ENCODE measurements at regions of chr10 and their contacts with region 1.

Region 1: GRCh38 chr10:76492026-76492425 is 1060.6 kb downstream of the LRMDA start:
- DNase-seq: no peak
- ATAC-seq: no peak
- H3K4me3 ChIP-seq: no peak overlapping the region
- H3K27ac ChIP-seq: peak overlapping the region; percentile 57 to 85
- H3K4me1 ChIP-seq: no peaks in the 10 kb centered on the region
- H3K27me3 ChIP-seq: no peaks in the 10 kb centered on the region

Region 2: DNA sequence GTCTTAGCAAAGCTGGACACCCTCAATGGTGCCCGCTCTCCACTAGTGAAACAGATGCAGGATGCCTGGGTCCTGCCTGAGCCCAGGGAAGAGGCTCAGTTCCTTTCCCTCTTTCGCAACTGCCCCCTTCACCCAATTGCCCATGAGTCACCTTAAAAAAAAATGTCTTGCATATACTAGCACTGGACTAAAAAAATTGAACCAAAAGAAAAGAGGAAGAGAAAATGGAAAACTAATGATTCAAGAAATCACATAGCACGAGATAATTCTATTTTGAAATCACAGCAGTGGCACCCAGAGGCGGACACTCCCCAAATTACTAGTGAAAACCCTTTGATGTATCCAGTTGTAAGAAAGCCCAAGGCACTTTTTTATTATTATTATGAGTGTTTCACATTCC is 88.1 kb before region 1 on chr10:
- intact Hi-C with region 1: loop called in 1 of 2 experiments (anchors 5 kb)
- DNase-seq: peak in 1 of 2 donors; percentile 59
- ATAC-seq: peak; percentile 61
- H3K4me3 ChIP-seq: no peak overlapping the region
- H3K27ac ChIP-seq: peak overlapping the region in 1 of 2 donors; percentile 68
- H3K4me1 ChIP-seq: peaks cover 3 to 18% of the 10 kb centered on the region in 2 donors
- H3K27me3 ChIP-seq: no peaks in the 10 kb centered on the region

Region 3: GRCh38 chr10:76444034-76444800 is 47.8 kb before region 1 on chr10:
- intact Hi-C with region 1: no loop called
- DNase-seq: no peak
- ATAC-seq: peak; percentile 50
- H3K4me3 ChIP-seq: no peak overlapping the region
- H3K27ac ChIP-seq: no peak overlapping the region
- H3K4me1 ChIP-seq: no peaks in the 10 kb centered on the region
- H3K27me3 ChIP-seq: no peaks in the 10 kb centered on the region

Region 4: DNA sequence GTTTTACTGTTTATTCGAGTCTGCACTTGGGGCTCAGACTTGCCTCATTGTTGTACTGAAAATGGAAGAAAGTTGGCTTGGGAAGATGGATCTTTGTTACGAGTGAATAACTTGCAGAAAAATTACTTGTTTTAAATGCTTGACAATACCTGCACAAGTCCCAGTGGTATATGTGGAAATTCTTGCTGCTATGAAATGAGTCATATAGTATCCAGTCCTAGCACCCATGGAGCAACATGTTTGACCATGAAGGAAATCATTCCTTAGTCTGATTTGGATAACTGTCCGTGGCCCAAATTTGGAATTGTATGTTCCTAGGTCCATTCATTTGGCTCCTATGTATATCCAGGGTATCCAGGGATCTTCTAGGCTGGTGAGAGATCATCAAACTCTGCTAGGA is 48.8 kb after region 1 on chr10:
- intact Hi-C with region 1: no loop called
- DNase-seq: no peak
- ATAC-seq: no peak
- H3K4me3 ChIP-seq: no peak overlapping the region
- H3K27ac ChIP-seq: no peak overlapping the region
- H3K4me1 ChIP-seq: no peaks in the 10 kb centered on the region
- H3K27me3 ChIP-seq: no peaks in the 10 kb centered on the region

Region 5: GRCh38 chr10:76697923-76698322 is 205.9 kb after region 1 on chr10:
- intact Hi-C with region 1: no loop called
- DNase-seq: no peak
- ATAC-seq: no peak
- H3K4me3 ChIP-seq: no peak overlapping the region
- H3K27ac ChIP-seq: no peak overlapping the region
- H3K4me1 ChIP-seq: no peaks in the 10 kb centered on the region
- H3K27me3 ChIP-seq: no peaks in the 10 kb centered on the region